ENCODE measurements at regions of chr19 and their contacts with region 1.

Region 1: GRCh38 chr19:23758187-23759074 is at the start of gene ZNF681:
- DNase-seq: peak; percentile 94
- H3K4me3 Mint-ChIP-seq: peak within 1 kb of the TSS; percentile 95
- H3K27ac Mint-ChIP-seq: peak within 1 kb of the TSS; percentile 93
- H3K4me1 Mint-ChIP-seq: peaks cover 19% of the 10 kb centered on the region
- H3K27me3 Mint-ChIP-seq: no peaks in the 10 kb centered on the region
- total RNA-seq, gene ZNF681: 3.1 to 5.1 TPM

Region 2: GRCh38 chr19:23273590-23274413 is 484.6 kb before region 1 on chr19:
- CTCF ChIA-PET with region 1: no interaction called
- intact Hi-C with region 1: loop called (anchors 2 kb)
- DNase-seq: peak; percentile 96
- H3K4me3 Mint-ChIP-seq: peak overlapping the region; percentile 93
- H3K27ac Mint-ChIP-seq: peak overlapping the region; percentile 92
- H3K4me1 Mint-ChIP-seq: peaks cover 28% of the 10 kb centered on the region
- H3K27me3 Mint-ChIP-seq: no peaks in the 10 kb centered on the region

Region 3: DNA sequence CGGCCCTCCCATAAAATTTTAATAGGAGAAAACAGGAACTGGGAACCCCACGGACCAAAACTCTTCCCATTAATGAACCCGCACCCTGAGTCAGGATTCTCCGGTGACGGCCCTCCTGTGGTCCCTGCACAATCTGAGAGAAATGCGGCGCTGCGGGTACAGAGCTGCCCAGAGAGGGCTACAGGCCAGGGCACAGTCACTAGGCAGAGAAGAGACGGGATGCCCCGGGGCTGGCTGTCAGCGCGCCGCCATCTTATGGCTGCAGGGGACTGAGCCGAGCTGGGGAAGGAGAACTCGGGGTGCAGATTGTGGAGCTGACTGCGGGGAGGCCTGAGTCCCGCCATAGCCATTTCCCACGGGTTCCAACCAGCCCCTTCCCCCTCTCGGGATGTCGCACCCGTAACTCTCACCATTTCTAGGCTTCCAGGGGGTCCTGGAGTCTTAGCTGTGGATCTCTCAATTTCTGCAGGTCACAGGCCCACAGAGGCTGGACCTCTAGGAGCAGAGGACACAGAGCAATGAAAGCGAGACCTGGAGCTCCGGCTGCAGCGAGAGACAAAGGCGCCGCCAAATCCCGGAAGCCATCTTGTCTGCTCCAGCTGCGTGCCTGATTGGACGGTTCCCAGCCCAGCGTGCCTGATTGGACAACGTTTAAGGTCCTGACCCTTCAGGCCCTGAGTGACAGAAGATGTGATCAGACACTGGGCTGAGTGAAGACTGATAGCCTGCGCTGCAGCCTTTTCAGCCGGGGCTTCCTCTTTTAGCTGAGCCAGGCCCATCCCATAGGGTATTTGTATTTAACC is 71.6 kb before region 1 on chr19 and contains the start of gene ZNF675:
- CTCF ChIA-PET with region 1: interaction called, 3 read pairs
- intact Hi-C with region 1: loop called (anchors 1 kb)
- DNase-seq: peak; percentile 94
- H3K4me3 Mint-ChIP-seq: peak within 1 kb of the TSS; percentile 96
- H3K27ac Mint-ChIP-seq: peak within 1 kb of the TSS; percentile 97
- H3K4me1 Mint-ChIP-seq: peaks cover 44% of the 10 kb centered on the region
- H3K27me3 Mint-ChIP-seq: no peaks in the 10 kb centered on the region
- total RNA-seq, gene ZNF675: 23.8 to 25.2 TPM

Region 4: DNA sequence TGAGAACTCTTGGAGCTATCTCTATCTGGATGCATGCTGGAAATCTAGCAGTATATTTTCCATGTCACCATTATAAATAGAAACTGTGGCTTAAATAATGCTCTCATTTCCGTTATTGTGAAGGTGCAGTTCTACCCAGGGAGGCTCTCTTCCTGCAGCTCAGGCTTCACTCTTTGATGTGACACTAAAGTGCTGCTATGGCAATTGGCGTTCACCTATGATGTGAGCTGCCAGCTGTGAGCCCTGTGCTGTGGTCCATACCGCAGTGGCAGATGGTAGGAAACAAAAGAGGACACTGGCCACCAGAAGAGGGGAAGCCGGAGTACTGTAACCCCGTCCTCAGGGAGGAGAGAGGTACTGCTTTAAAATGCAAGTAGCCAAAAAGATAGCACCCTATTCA is 40.9 kb after region 1 on chr19:
- CTCF ChIA-PET with region 1: no interaction called
- intact Hi-C with region 1: loop called (anchors 2 kb)
- DNase-seq: peak; percentile 53
- H3K4me3 Mint-ChIP-seq: peak overlapping the region; percentile 68
- H3K27ac Mint-ChIP-seq: peak overlapping the region; percentile 60
- H3K4me1 Mint-ChIP-seq: peaks cover 21% of the 10 kb centered on the region
- H3K27me3 Mint-ChIP-seq: no peaks in the 10 kb centered on the region

Region 5: GRCh38 chr19:24004166-24004565 is 245.7 kb after region 1 on chr19:
- CTCF ChIA-PET with region 1: no interaction called
- intact Hi-C with region 1: no loop called
- DNase-seq: no peak
- H3K4me3 Mint-ChIP-seq: no peak overlapping the region
- H3K27ac Mint-ChIP-seq: no peak overlapping the region
- H3K4me1 Mint-ChIP-seq: no peaks in the 10 kb centered on the region
- H3K27me3 Mint-ChIP-seq: no peaks in the 10 kb centered on the region

Region 6: DNA sequence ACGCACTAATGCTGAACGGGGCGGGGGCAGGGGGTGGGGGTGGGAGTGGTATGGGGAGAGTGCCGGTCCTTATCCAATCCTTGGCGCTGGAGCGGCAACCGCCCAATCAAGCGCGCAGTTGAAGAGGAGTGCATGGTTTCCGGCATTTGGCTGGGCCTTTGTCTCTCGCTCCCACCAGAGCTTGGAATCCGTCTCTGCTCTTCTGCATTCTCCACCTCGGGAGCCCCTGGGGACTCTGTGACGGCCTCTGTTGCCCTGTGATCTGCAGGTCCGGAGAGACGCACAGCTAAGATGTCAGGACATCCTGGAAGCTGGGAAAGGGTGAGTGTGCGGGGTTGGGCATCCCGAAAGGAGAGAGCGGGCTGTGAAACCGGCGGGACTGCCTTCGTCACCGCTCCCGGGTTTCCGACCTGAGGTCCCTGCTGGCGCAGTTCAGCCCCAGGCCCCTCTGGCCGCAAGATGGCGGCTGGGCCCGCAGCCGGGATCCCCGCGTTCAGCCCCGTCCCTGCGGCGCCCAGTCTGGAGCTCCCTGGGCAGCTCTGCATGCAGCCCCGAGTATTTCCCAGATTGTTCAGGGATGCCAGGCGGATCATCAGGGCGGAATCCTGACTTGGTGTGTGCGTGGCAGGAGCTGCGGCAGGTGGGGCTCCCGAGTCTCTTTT is 275.0 kb after region 1 on chr19:
- CTCF ChIA-PET with region 1: no interaction called
- intact Hi-C with region 1: loop called (anchors 1 kb)
- DNase-seq: peak; percentile 90
- H3K4me3 Mint-ChIP-seq: peak overlapping the region; percentile 99
- H3K27ac Mint-ChIP-seq: peak overlapping the region; percentile 98
- H3K4me1 Mint-ChIP-seq: peaks cover 41% of the 10 kb centered on the region
- H3K27me3 Mint-ChIP-seq: no peaks in the 10 kb centered on the region

Measured in activated naive CD4-positive, alpha-beta T cell treated with anti-CD3 and anti-CD28 coated beads for 36 hours (primary cell).